Naive thymus-derived CD4-positive, alpha-beta T cell (primary cell): ENCODE measurements at regions of chr2 and their contacts with region 1.

Region 1: GRCh38 chr2:7044261-7045250 is 127.3 kb downstream of the RNF144A start:
- DNase-seq: peak; percentile 29 to 67 (median 59)
- ATAC-seq: peak; percentile 91
- H3K4me3 ChIP-seq: no peak overlapping the region
- H3K4me3 Mint-ChIP-seq: peak overlapping the region in 1 of 10 donors; percentile 10
- H3K27ac ChIP-seq: no peak overlapping the region
- H3K27ac Mint-ChIP-seq: peak overlapping the region in 8 of 9 donors; percentile 30 to 77 (median 58)
- H3K4me1 ChIP-seq: peaks cover 0 to 4% of the 10 kb centered on the region in 2 donors
- H3K4me1 Mint-ChIP-seq: peaks cover 5 to 54% (median 35%) of the 10 kb centered on the region in 7 donors
- H3K27me3 ChIP-seq: no peaks in the 10 kb centered on the region
- H3K27me3 Mint-ChIP-seq: no peaks in the 10 kb centered on the region

Region 2: DNA sequence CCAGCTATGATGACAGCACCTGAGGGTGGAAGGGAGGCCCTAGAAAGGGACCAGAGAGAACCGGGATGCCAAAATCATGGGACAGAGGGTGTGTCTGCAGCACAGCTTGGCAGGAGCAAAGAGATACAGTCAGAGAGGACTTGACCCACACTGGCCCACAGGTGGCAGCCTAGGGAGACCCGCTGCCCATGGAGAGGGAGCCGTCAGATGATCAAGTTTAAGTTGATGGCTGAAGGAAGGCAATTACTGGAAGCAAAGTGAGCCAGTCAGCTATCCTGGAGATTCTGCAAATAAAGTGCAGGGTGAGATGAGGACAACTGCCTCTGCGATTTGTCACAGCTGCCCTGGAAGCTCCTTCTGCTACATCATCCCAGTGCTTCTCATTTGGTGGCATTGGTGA is 252.9 kb before region 1 on chr2:
- CTCF ChIA-PET with region 1: no interaction called
- POLR2A ChIA-PET with region 1: no interaction called
- intact Hi-C with region 1: no loop called
- DNase-seq: no peak
- ATAC-seq: no peak
- H3K4me3 ChIP-seq: no peak overlapping the region
- H3K4me3 Mint-ChIP-seq: no peak overlapping the region
- H3K27ac ChIP-seq: no peak overlapping the region
- H3K27ac Mint-ChIP-seq: no peak overlapping the region
- H3K4me1 ChIP-seq: no peaks in the 10 kb centered on the region
- H3K4me1 Mint-ChIP-seq: no peaks in the 10 kb centered on the region
- H3K27me3 ChIP-seq: no peaks in the 10 kb centered on the region
- H3K27me3 Mint-ChIP-seq: peaks cover 0 to 18% (median 0%) of the 10 kb centered on the region in 5 donors

Region 3: GRCh38 chr2:6826081-6826913 is 218.3 kb before region 1 on chr2:
- CTCF ChIA-PET with region 1: interaction called, 5 read pairs
- POLR2A ChIA-PET with region 1: no interaction called
- intact Hi-C with region 1: loop called (anchors 1 kb)
- DNase-seq: peak in 8 of 9 donors; percentile 26 to 58 (median 51)
- ATAC-seq: peak; percentile 92
- H3K4me3 ChIP-seq: no peak overlapping the region
- H3K4me3 Mint-ChIP-seq: no peak overlapping the region
- H3K27ac ChIP-seq: no peak overlapping the region
- H3K27ac Mint-ChIP-seq: no peak overlapping the region
- H3K4me1 ChIP-seq: no peaks in the 10 kb centered on the region
- H3K4me1 Mint-ChIP-seq: peaks cover 0 to 14% (median 11%) of the 10 kb centered on the region in 7 donors
- H3K27me3 ChIP-seq: no peaks in the 10 kb centered on the region
- H3K27me3 Mint-ChIP-seq: no peaks in the 10 kb centered on the region

Region 4: DNA sequence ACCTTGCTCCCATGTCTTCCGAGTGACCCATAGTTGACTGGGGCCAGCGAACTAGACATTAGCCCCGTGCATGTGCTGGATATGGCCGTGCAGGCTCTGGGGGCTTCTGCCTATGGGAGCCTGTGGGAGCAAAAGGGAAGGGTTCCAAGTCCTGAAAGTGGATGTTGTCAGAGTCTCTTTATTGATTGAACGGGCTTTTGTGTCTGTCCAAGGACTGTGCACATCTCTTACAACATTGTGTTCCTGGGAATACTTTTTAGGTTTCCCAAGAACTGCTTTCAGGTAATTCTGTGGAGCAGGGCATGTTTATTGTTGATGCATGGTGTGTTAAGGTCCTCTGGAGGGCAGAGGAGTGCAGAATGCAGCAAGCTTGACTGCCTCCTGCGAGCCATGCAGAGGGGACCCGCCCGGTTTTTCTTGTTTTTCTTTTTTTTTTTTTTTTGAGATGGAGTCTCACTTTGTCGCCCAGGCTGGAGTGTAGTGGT is 122.3 kb before region 1 on chr2:
- CTCF ChIA-PET with region 1: interaction called, 12 read pairs
- POLR2A ChIA-PET with region 1: no interaction called
- intact Hi-C with region 1: loop called in 1 of 2 experiments (anchors 5 kb)
- DNase-seq: peak in 4 of 9 donors; percentile 23 to 43 (median 34)
- ATAC-seq: peak; percentile 35
- H3K4me3 ChIP-seq: no peak overlapping the region
- H3K4me3 Mint-ChIP-seq: peak overlapping the region in 9 of 10 donors; percentile 28 to 84 (median 61)
- H3K27ac ChIP-seq: peak overlapping the region; percentile 37
- H3K27ac Mint-ChIP-seq: peak overlapping the region in 7 of 9 donors; percentile 25 to 89 (median 72)
- H3K4me1 ChIP-seq: peaks cover 9 to 63% of the 10 kb centered on the region in 2 donors
- H3K4me1 Mint-ChIP-seq: peaks cover 57 to 88% (median 83%) of the 10 kb centered on the region in 7 donors
- H3K27me3 ChIP-seq: no peaks in the 10 kb centered on the region
- H3K27me3 Mint-ChIP-seq: peaks cover 0 to 3% (median 0%) of the 10 kb centered on the region in 5 donors

Region 5: GRCh38 chr2:7057865-7058400 is 13.4 kb after region 1 on chr2:
- CTCF ChIA-PET with region 1: interaction called, 12 read pairs
- POLR2A ChIA-PET with region 1: interaction called, 15 read pairs
- intact Hi-C with region 1: loop called in 1 of 2 experiments (anchors 1 kb)
- DNase-seq: peak in 6 of 9 donors; percentile 48 to 69 (median 64)
- ATAC-seq: peak; percentile 66
- H3K4me3 ChIP-seq: peak overlapping the region; percentile 24
- H3K4me3 Mint-ChIP-seq: peak overlapping the region in 9 of 10 donors; percentile 51 to 91 (median 79)
- H3K27ac ChIP-seq: peak overlapping the region; percentile 65
- H3K27ac Mint-ChIP-seq: peak overlapping the region in 2 of 9 donors; percentile 90 to 97
- H3K4me1 ChIP-seq: peaks cover 37 to 53% of the 10 kb centered on the region in 2 donors
- H3K4me1 Mint-ChIP-seq: peaks cover 0 to 18% (median 6%) of the 10 kb centered on the region in 7 donors
- H3K27me3 ChIP-seq: no peaks in the 10 kb centered on the region
- H3K27me3 Mint-ChIP-seq: no peaks in the 10 kb centered on the region